Ascending aorta (tissue), 2 donors: ENCODE measurements at regions of chr11 and their contacts with region 1.

Region 1: GRCh38 chr11:18634140-18635032 is at the start of gene SPTY2D1:
- DNase-seq: peak; percentile 99 to 100
- H3K4me3 ChIP-seq: peak within 1 kb of the TSS; percentile 84 to 99
- H3K27ac ChIP-seq: peak within 1 kb of the TSS; percentile 96
- H3K4me1 ChIP-seq: peaks cover 0 to 12% of the 10 kb centered on the region in 2 donors
- H3K27me3 ChIP-seq: no peaks in the 10 kb centered on the region
- CTCF ChIP-seq: no peak
- total RNA-seq, gene SPTY2D1: 7.8 TPM

Region 2: DNA sequence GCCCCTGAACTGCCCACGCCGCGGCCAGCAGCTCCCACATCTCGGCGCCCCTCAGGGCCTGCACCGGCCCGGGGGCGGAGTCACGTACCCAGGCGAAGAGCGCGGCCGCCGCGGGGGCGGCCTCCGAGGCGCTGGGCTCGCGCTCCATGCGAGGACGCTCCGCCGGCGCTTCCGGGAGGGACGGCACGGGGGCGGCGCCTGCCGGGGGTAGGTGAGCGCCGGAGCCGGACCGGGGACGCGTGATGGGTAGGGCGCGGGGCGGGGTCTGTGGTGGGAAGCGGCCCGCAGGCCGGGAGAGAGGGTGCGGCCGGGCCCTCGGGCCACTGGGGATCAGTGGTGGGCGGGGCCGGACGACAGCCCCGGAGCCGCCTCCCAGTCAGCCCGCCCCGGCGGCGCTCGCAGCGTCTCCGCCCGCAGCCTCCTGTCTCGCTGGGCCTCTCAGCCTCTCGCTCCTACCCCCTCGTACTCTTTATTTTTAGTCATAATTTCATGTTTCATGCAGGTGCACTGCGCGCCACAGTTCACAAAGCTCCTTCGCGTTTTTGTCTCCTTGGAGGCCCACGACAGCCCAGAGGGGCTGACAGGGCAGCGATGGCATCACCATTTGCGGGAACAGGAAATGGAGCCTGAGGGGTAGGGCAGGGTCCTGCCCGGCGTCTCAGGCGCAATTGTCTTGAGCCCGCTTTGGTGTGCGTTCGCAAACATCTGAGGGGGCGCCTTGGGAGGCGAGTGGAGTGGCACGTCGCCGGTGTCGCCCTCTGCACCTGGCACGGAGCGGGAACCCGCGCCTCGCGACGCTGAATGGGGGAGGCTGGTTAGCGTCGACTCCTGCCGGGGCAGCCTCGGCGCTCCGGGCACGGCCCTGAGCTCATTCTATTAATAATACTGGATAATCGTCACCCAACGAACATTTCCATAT is 621.3 kb before region 1 on chr11 and contains the start of gene SERGEF:
- intact Hi-C with region 1: loop called (anchors 2 kb)
- DNase-seq: peak; percentile 74 to 96
- H3K4me3 ChIP-seq: peak within 1 kb of the TSS; percentile 76 to 97
- H3K27ac ChIP-seq: peak within 1 kb of the TSS; percentile 93 to 98
- H3K4me1 ChIP-seq: no peaks in the 10 kb centered on the region
- H3K27me3 ChIP-seq: no peaks in the 10 kb centered on the region
- CTCF ChIP-seq: peak in 2 of 3 experiments; percentile 9 to 20
- total RNA-seq, gene SERGEF: 13.6 TPM

Region 3: DNA sequence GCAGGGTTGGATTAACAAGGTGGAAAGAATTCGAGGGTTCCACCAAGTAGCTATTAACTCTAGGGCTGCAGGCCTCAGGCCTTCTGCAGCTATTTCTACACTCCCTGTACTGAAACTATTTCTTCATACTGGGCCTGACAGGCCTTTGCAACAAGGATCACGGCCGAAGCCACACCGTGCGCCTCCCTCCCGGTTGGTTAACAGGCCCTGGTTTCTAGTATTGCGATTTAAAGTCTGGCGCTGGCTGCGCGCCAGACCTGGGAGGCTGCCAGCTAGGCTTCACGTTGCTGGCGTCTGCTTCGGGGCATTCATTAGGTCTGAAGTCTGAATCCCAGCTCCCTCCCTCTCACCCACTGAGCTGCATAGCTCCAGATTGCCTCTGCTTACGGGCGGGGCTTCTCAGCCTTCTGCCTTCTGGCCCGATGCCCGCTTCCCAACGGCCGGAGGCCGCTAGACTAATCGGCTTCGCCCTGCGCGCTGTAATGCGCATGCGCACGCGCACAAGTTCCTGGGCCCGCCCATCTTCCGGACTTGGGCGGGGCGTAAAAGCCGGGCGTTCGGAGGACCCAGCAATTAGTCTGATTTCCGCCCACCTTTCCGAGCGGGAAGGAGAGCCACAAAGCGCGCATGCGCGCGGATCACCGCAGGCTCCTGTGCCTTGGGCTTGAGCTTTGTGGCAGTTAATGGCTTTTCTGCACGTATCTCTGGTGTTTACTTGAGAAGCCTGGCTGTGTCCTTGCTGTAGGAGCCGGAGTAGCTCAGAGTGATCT is 238.5 kb before region 1 on chr11:
- intact Hi-C with region 1: loop called (anchors 1 kb)
- DNase-seq: peak; percentile 91 to 98
- H3K4me3 ChIP-seq: peak overlapping the region; percentile 85 to 99
- H3K27ac ChIP-seq: peak overlapping the region; percentile 94 to 98
- H3K4me1 ChIP-seq: peaks cover 5 to 18% of the 10 kb centered on the region in 2 donors
- H3K27me3 ChIP-seq: no peaks in the 10 kb centered on the region
- CTCF ChIP-seq: no peak

Region 4: GRCh38 chr11:18463439-18463838 is 170.9 kb before region 1 on chr11:
- intact Hi-C with region 1: no loop called
- DNase-seq: no peak
- H3K4me3 ChIP-seq: no peak overlapping the region
- H3K27ac ChIP-seq: no peak overlapping the region
- H3K4me1 ChIP-seq: no peaks in the 10 kb centered on the region
- H3K27me3 ChIP-seq: no peaks in the 10 kb centered on the region
- CTCF ChIP-seq: no peak

Region 5: DNA sequence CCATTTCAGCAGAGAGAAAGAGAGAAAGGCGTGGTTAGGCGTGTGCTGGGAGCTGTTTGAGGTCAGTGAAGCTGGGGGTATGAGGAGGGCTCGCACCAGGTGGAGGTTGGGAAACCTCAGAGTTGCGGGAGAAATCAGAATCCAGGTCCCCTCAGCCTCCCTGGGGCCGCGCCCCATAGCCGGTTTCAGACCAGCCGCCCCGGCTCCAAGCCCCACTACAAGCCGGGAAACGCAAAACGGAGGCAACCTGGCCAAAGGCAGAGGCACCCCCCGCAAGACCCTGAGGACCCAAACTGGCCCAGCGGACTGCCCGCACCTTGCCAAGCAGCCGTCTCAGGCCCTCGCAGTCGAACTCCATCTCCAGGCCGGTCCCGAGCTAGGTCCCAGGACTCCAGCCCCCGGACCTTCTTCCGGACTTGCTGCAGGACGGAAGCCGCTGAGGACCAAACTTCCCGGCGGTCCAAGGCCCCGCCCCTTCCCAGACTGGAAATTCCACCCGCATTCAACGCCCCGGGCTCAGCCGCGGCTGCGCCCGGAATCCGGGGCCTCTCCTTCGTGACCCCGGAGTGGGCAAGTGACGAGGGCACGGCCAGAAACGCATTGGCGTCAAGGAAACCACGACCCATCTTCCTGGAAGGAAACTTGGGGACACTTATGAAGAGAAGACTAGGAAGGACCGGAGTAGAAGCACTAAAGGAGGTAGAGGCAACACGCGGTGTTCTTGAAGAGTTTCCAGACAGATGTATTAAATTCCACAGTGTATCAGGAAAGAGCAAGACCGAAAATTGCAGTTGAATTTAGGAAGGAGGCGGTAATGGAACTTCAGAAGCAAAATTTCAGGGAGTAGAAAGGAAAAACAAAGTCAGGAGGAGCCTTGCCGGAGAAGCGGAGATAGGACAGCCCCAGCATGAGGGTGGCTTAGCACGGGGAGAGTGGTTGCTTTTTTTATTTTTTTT is 45.8 kb before region 1 on chr11 and contains the start of gene UEVLD:
- intact Hi-C with region 1: loop called (anchors 1 kb)
- DNase-seq: peak; percentile 33 to 94
- H3K4me3 ChIP-seq: peak within 1 kb of the TSS; percentile 69 to 97
- H3K27ac ChIP-seq: peak within 1 kb of the TSS; percentile 75 to 90
- H3K4me1 ChIP-seq: peaks cover 8 to 21% of the 10 kb centered on the region in 2 donors
- H3K27me3 ChIP-seq: no peaks in the 10 kb centered on the region
- CTCF ChIP-seq: no peak
- total RNA-seq, gene UEVLD: 10.1 TPM

Region 6: DNA sequence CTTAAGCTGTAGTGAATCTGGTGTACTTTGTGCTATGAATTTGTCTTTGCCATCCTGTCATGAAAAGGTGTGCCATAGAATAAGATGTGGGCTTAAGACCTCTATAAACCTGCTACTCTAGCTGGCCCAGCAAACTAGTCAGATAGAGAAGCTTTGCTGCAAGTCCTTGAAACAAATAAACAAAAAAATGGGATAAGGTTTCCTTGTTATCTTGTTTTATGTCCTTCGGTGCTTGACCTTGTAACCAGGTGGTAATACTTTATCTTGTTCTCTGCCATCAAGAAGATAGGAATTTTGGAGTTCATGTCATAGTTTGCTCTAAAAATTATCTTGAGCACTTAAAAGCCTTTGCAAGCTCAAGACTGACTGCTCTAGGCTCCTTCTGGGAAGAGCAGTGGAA is 49.9 kb after region 1 on chr11:
- intact Hi-C with region 1: no loop called
- DNase-seq: no peak
- H3K4me3 ChIP-seq: no peak overlapping the region
- H3K27ac ChIP-seq: no peak overlapping the region
- H3K4me1 ChIP-seq: no peaks in the 10 kb centered on the region
- H3K27me3 ChIP-seq: no peaks in the 10 kb centered on the region
- CTCF ChIP-seq: no peak

Region 7: DNA sequence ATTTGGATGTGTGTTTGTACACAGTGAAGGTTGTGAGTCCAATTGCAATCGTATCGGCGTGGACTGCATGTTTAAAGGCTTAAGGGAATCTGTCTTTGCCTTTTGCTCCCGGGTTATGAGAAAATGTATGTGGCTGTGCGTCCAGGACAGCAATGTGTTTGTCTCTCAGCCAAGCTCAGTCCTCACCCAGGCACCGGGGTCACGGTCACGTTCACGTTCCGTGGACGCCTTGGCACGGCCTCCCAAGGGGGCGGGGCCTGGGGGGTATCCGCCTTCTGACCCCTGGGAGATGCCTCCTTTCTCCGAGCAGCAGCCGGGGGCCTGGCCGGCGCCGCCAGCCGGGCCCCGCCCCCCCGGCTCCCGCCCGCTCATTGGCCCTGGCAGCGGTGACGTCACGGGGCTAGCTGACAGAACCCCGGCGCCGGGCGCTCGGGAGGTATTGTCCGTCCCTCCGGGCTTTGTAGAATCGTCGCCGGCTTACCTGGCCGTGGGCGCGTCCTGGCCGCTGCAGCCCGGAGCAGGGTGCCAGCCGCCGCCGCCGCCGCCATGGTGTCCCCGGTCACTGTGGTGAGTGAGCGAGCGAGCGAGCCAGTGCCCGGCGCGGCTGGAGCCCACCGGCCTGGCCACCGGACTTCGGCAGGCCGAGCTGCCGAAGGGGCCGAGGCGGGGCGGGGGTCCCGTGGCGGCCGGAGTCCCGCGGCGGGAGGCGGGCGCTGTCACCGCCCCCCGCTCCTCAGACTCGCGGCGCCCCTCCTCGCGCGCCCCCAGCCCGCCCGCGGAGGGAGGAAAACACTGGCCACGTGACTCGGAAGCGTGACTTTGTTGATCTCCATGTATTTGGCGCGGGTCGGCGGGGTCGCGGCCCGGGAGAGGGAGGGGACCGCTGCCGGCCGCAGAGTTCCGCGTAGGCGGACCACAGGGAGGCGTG is 64.2 kb after region 1 on chr11 and contains the start of gene TMEM86A:
- intact Hi-C with region 1: loop called (anchors 1 kb)
- DNase-seq: peak; percentile 88 to 98
- H3K4me3 ChIP-seq: peak within 1 kb of the TSS; percentile 96 to 99
- H3K27ac ChIP-seq: peak within 1 kb of the TSS; percentile 73 to 84
- H3K4me1 ChIP-seq: peaks cover 0 to 5% of the 10 kb centered on the region in 2 donors
- H3K27me3 ChIP-seq: no peaks in the 10 kb centered on the region
- CTCF ChIP-seq: no peak
- total RNA-seq, gene TMEM86A: 4.8 TPM

Region 8: DNA sequence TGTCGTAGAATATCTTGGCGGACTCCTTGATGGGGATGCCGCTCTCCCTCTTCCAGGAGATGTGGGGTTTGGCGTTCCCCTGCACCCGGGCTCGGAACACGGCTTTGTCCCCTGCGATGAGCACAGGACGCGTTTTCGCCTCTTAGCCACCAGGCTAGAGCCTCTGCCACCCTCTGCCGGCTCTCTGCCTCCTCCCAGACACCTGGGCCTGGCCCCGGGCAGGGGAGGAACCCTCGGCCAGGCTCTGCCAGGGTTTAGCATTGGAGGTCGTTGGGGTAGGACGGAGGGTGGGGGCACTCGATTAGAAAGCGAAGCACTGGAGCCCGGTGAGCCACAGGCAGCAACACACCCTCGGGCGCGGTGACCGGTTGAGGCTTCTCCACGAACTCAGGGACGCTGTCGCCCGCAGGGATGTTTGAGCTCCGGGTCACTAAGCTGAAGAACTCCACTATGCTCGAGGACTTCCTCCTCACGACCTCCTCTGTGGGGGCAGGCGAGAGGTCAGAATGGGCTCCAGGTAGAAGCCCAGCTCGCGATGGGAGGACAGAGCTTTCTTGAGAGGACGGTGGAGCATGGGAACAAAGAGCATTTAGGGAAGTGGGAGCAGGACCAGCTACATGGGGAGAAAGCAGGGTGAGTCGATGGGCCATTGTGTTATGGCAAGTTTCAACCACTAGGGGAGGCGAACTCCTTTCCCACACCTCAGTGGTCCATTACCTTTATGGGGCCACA is 87.3 kb after region 1 on chr11:
- intact Hi-C with region 1: loop called (anchors 5 kb)
- DNase-seq: no peak
- H3K4me3 ChIP-seq: peak overlapping the region; percentile 61 to 72
- H3K27ac ChIP-seq: peak overlapping the region; percentile 75 to 81
- H3K4me1 ChIP-seq: peaks cover 3 to 4% of the 10 kb centered on the region in 2 donors
- H3K27me3 ChIP-seq: no peaks in the 10 kb centered on the region
- CTCF ChIP-seq: peak; percentile 56 to 83 (median 69)

Region 9: GRCh38 chr11:18878211-18878610 is 243.8 kb after region 1 on chr11:
- intact Hi-C with region 1: no loop called
- DNase-seq: no peak
- H3K4me3 ChIP-seq: no peak overlapping the region
- H3K27ac ChIP-seq: no peak overlapping the region
- H3K4me1 ChIP-seq: no peaks in the 10 kb centered on the region
- H3K27me3 ChIP-seq: no peaks in the 10 kb centered on the region
- CTCF ChIP-seq: no peak